Calu3 (cell line): ENCODE measurements at regions of chr22 and their contacts with region 1.

Region 1: GRCh38 chr22:37383341-37383740 is 43.9 kb downstream of the ELFN2 start:
- DNase-seq: no peak
- H3K4me3 Mint-ChIP-seq: no peak overlapping the region
- H3K27ac Mint-ChIP-seq: no peak overlapping the region
- H3K4me1 Mint-ChIP-seq: peaks cover 13% of the 10 kb centered on the region
- H3K27me3 Mint-ChIP-seq: peaks cover 80% of the 10 kb centered on the region
- CTCF ChIP-seq: no peak

Region 2: GRCh38 chr22:37411655-37412054 is 28.3 kb after region 1 on chr22:
- CTCF ChIA-PET with region 1: no interaction called
- intact Hi-C with region 1: no loop called
- DNase-seq: no peak
- H3K4me3 Mint-ChIP-seq: no peak overlapping the region
- H3K27ac Mint-ChIP-seq: no peak overlapping the region
- H3K4me1 Mint-ChIP-seq: peaks cover 4% of the 10 kb centered on the region
- H3K27me3 Mint-ChIP-seq: peaks cover 5% of the 10 kb centered on the region
- CTCF ChIP-seq: no peak

Region 3: GRCh38 chr22:37561212-37562048 is 178.1 kb after region 1 on chr22:
- CTCF ChIA-PET with region 1: interaction called, 10 read pairs
- intact Hi-C with region 1: no loop called
- DNase-seq: peak; percentile 97
- H3K4me3 Mint-ChIP-seq: peak overlapping the region; percentile 87
- H3K27ac Mint-ChIP-seq: peak overlapping the region; percentile 100
- H3K4me1 Mint-ChIP-seq: peaks cover 82% of the 10 kb centered on the region
- H3K27me3 Mint-ChIP-seq: no peaks in the 10 kb centered on the region
- CTCF ChIP-seq: peak; percentile 90